Psoas muscle (tissue), 8 donors: ENCODE measurements at regions of chrX and their contacts with region 1.

Region 1: GRCh38 chrX:13658602-13659001 is 5.7 kb downstream of the TCEANC start:
- DNase-seq: no peak
- ATAC-seq: peak in 2 of 4 donors; percentile 39 to 76
- H3K4me3 ChIP-seq: no peak overlapping the region
- H3K27ac ChIP-seq: no peak overlapping the region
- H3K4me1 ChIP-seq: peaks cover 6% of the 10 kb centered on the region
- H3K27me3 ChIP-seq: no peaks in the 10 kb centered on the region
- CTCF ChIP-seq: peak; percentile 75

Region 2: GRCh38 chrX:13587786-13588477 is 70.7 kb before region 1 on chrX:
- intact Hi-C with region 1: no loop called
- DNase-seq: no peak
- ATAC-seq: no peak
- H3K4me3 ChIP-seq: no peak overlapping the region
- H3K27ac ChIP-seq: no peak overlapping the region
- H3K4me1 ChIP-seq: no peaks in the 10 kb centered on the region
- H3K27me3 ChIP-seq: peaks cover 0 to 29% (median 0%) of the 10 kb centered on the region in 3 donors
- CTCF ChIP-seq: no peak

Region 3: GRCh38 chrX:13734278-13735172 is 75.9 kb after region 1 on chrX and contains the starts of genes OFD1 and TRAPPC2:
- intact Hi-C with region 1: loop called in 1 of 2 experiments (anchors 5 kb)
- DNase-seq: peak; percentile 89 to 95
- ATAC-seq: peak; percentile 99 to 100 (median 100)
- H3K4me3 ChIP-seq: peak within 1 kb of the TSS; percentile 88
- H3K27ac ChIP-seq: peak within 1 kb of the TSS; percentile 86
- H3K4me1 ChIP-seq: peaks cover 3% of the 10 kb centered on the region
- H3K27me3 ChIP-seq: peaks cover 0 to 14% (median 0%) of the 10 kb centered on the region in 3 donors
- CTCF ChIP-seq: no peak
- total RNA-seq, gene OFD1: 7.2 to 8.2 (median 7.8) TPM
- total RNA-seq, gene TRAPPC2: 3.4 to 6.3 (median 5.0) TPM

Region 4: DNA sequence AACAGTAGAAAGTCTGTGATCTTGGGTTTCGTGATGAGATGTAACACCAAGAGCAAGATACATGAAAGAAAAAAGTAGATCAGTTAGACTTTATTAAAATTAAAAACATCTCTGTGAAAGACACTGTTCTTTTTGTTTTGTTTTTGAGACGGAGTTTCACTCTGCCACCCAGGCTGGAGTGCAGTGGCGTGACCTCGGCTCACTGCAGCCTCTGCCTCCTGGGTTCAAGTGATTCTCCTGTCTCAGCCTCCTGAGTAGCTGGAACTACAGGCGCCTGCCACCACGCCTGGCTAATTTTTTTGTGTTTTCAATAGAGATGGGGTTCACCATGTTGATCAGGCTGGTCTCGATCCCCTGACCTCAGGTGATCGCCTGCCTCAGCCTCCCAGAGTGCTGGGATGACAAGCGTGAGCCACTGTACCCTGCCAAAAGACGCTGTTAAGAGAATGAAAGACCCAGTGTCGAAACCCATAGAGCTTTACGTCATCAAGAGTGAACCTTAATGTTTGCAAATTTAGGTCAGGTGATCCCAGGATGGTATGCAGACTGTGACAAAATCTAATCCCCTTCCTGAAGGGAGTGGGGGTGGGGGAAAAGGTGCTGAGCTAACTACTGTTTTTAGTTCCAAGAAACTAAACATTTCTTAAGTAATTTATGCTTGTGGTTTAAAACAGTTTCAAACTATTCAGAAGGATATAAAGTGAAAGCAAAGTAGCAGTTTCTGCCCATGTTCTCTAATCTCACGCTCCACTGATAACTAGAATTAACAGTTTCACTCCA is 84.0 kb after region 1 on chrX:
- intact Hi-C with region 1: loop called in 1 of 2 experiments (anchors 5 kb)
- DNase-seq: no peak
- ATAC-seq: no peak
- H3K4me3 ChIP-seq: no peak overlapping the region
- H3K27ac ChIP-seq: no peak overlapping the region
- H3K4me1 ChIP-seq: no peaks in the 10 kb centered on the region
- H3K27me3 ChIP-seq: no peaks in the 10 kb centered on the region
- CTCF ChIP-seq: no peak

Region 5: DNA sequence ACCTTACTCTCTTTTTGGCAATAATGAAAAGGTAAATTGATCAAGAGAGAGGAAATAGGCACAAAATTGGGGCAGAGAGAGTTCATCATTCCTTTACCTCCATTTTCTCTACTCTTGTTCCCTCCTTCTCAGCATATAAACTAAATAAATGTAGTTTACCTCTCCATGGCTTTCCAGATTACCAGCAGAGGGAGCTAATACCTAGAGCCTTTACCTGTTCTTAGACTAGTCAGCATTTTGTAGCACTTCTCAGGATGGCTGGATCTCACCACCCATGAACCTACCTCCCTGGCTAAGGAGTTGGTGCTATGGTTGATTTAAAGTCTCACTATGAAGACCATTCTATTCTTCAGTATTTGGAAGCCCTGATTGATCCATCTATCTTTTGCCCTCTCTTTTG is 91.6 kb after region 1 on chrX:
- intact Hi-C with region 1: loop called in 1 of 2 experiments (anchors 5 kb)
- DNase-seq: no peak
- ATAC-seq: peak in 3 of 4 donors; percentile 36 to 58 (median 52)
- H3K4me3 ChIP-seq: no peak overlapping the region
- H3K27ac ChIP-seq: no peak overlapping the region
- H3K4me1 ChIP-seq: no peaks in the 10 kb centered on the region
- H3K27me3 ChIP-seq: no peaks in the 10 kb centered on the region
- CTCF ChIP-seq: peak; percentile 54

Region 6: DNA sequence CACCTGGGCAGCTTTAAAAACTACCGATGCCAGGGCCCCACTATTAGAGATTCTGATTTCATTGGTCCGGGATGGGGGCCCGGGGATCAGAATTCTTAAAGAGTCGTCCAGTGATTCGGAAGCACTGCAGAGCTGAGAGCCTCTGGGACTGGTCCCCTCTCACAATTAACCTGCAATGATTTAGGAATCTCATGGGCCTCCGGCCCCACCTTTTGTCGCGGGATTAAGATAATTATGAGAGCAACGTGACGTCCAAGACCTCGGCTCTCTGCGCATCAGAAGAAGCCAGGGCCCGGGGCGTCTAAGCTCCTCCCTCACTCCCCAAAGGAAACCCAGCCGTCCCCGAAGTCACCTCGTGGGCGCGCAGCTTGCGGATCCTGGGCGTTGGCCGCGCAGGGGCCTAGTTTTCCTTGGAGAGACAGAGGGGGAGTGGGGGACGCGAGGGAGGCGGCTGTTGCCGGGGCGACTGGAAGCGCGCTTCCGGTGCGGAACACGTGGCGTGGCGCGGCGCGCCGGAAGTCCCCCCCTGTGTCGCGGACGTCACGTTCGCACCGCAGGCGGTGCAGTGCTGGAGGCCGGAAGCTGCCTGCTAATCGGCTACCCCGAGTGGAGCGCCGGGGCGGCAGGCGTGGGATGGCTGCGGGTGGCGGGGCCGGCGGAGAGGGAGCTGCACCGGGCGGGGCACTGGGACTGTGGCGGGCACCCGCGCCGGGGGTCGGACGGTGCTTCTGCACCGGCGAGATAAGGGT is 371.0 kb after region 1 on chrX and contains the start of gene GEMIN8:
- intact Hi-C with region 1: loop called (anchors 2 to 5 kb)
- DNase-seq: peak; percentile 89 to 95
- ATAC-seq: peak; percentile 98
- H3K4me3 ChIP-seq: peak within 1 kb of the TSS; percentile 72
- H3K27ac ChIP-seq: peak within 1 kb of the TSS; percentile 91
- H3K4me1 ChIP-seq: peaks cover 13% of the 10 kb centered on the region
- H3K27me3 ChIP-seq: no peaks in the 10 kb centered on the region
- CTCF ChIP-seq: no peak
- total RNA-seq, gene GEMIN8: 7.8 to 8.5 (median 8.3) TPM